Transverse colon (tissue), 4 donors: ENCODE measurements at regions of chr3 and their contacts with region 1.

Region 1: DNA sequence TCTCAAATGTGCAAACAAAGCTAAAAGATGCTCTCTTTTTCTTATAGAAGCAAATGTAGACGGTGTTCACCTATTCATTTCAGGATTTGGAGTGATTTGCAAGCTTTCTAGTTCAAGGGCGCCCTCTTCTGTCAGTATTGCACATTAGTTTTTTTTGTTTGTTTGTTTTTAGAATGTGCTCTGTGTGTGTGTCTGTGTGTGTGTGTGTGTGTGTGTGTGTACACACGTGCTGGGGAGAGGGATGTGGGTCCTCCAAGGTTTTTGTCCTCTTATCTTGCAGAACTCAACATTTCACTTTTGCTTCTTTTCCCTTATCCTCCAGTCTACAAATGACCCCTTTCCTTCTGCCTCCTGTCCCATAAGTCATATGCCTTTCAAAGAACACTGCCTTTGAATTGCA is 23.5 kb downstream of the DNAH1 start:
- DNase-seq: peak; percentile 33
- H3K4me3 ChIP-seq: no peak overlapping the region
- H3K27ac ChIP-seq: no peak overlapping the region
- H3K4me1 ChIP-seq: no peaks in the 10 kb centered on the region
- H3K27me3 ChIP-seq: no peaks in the 10 kb centered on the region
- CTCF ChIP-seq: peak; percentile 62 to 85 (median 66)
- EP300 ChIP-seq: no peak
- POLR2A ChIP-seq: no peak

Region 2: GRCh38 chr3:52001443-52001974 is 338.1 kb before region 1 on chr3:
- in situ Hi-C with region 1: loop called in 2 of 4 experiments (anchors 25 kb)
- intact Hi-C with region 1: no loop called
- DNase-seq: peak; percentile 79
- H3K4me3 ChIP-seq: no peak overlapping the region
- H3K27ac ChIP-seq: no peak overlapping the region
- H3K4me1 ChIP-seq: peaks cover 0 to 15% (median 6%) of the 10 kb centered on the region in 4 donors
- H3K27me3 ChIP-seq: peaks cover 4% of the 10 kb centered on the region
- CTCF ChIP-seq: peak; percentile 87 to 96 (median 90)
- EP300 ChIP-seq: no peak
- POLR2A ChIP-seq: no peak

Region 3: DNA sequence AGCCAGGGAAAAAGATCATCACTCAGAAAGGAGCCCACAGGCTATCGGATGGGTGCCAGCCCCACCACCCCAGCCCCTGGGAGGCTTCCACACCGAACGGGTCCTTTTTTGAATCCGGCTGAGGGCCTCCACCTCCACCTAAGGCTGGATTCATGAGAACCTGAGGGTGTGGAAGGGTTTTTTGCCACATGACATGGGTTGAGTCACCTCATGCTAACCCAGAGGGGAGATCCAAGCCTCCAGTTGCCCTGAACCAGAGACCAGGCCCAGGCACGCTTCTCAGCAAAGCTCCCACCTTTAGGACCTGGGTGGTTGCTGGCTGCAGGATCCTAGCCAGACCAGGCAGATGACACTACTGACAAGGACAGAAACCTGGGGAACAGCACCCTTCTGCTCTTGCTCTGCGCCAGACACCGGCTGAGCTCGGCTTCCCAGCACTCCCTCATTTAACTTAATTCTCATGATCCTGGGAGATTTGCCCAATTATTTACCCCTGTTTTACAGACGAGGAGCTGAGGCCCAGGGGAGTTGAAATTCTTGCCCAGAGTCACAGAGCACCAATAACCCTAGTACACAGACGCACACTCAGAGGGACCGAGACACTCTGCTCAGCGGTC is 308.8 kb before region 1 on chr3:
- in situ Hi-C with region 1: no loop called
- intact Hi-C with region 1: no loop called
- DNase-seq: no peak
- H3K4me3 ChIP-seq: no peak overlapping the region
- H3K27ac ChIP-seq: no peak overlapping the region
- H3K4me1 ChIP-seq: peaks cover 0 to 5% (median 0%) of the 10 kb centered on the region in 4 donors
- H3K27me3 ChIP-seq: no peaks in the 10 kb centered on the region
- CTCF ChIP-seq: no peak
- EP300 ChIP-seq: no peak
- POLR2A ChIP-seq: no peak

Region 4: DNA sequence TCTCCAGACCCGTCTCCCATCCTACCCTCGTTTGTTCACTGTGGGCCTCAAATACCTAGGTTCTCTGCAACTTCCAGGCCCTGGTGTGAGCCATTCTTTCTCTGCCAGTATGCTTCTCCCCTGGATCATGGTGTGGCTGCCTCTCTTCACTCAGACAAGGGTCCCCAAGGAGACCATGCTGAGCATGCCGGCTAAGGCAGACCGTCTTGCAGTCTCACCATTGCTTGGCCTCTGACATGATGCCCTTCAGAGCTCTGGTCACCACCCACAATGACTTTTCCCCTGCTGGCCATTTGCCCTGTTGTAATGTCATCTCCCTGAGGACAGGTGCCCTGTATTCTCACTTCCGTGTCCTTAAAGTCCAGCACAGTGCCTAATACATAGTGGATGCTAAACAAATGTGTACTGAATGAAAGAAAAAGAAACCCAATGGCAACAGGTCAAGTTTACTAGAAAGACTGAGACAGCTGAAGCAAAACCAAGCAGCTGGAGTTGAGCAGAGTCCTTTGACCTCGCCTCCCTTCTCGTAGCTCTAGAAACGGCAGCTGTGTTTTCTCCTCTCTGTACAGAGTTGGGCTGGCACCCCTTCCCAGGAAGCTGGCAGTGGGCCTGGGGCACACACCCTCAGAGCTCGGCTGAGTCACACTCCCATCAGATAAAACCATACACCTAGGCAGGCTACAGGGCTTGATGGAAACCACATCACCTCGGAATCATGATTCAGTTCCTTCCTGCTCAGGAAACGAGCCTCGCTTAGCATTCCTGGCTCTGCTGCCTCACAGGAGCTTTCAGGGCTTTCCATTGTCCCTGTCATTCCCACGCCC is 122.8 kb before region 1 on chr3:
- in situ Hi-C with region 1: loop called in 1 of 4 experiments (anchors 5 kb)
- intact Hi-C with region 1: loop called (anchors 2 kb)
- DNase-seq: peak; percentile 89
- H3K4me3 ChIP-seq: no peak overlapping the region
- H3K27ac ChIP-seq: peak overlapping the region; percentile 81 to 88 (median 87)
- H3K4me1 ChIP-seq: peaks cover 23 to 41% (median 30%) of the 10 kb centered on the region in 4 donors
- H3K27me3 ChIP-seq: no peaks in the 10 kb centered on the region
- CTCF ChIP-seq: peak in 2 of 5 experiments; percentile 34 to 56
- EP300 ChIP-seq: no peak
- POLR2A ChIP-seq: peak; percentile 70

Region 5: DNA sequence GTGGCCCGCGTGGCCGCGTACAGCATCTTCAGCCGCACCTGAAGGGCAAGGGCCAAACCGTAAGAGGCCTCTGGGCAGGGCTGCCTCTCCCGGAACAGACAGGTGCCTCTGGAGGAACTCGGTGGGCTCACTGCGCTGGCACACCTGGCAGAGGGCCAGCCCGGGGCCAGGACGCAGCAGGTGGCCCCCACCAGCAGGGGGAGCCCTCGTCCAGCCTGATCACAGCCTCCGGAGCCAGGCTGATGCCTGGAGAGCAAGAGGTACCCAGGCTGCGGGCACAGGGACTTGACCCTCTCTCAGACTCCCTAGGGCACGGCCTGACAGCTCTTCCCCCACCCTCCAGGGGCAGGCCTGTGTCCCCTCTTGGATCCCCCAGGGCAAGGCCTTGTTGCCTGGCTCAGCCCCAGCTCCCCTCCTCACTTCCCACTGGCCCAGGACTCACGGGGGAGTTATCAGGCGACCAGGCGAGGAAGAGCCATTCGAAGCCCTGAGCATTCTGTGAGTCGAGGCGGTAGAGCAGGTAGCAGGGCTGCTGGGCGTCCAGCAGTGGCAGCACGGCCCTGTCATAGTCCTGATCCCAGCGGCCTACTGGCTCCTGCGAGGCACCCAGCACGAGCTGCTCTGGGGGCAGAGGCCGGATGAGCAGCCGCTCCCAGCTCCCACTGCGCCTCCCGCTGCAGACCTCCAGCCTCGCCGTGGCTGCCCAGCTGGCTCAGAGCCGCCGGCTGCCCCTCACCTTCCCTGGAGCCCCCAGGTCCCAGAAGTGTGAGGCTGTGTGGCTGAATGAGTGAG is 107.9 kb before region 1 on chr3:
- in situ Hi-C with region 1: loop called in 3 of 4 experiments (anchors 5 to 25 kb)
- intact Hi-C with region 1: no loop called
- DNase-seq: peak; percentile 86
- H3K4me3 ChIP-seq: no peak overlapping the region
- H3K27ac ChIP-seq: no peak overlapping the region
- H3K4me1 ChIP-seq: peaks cover 4 to 10% (median 7%) of the 10 kb centered on the region in 4 donors
- H3K27me3 ChIP-seq: no peaks in the 10 kb centered on the region
- CTCF ChIP-seq: peak; percentile 89 to 95 (median 93)
- EP300 ChIP-seq: no peak
- POLR2A ChIP-seq: no peak

Region 6: DNA sequence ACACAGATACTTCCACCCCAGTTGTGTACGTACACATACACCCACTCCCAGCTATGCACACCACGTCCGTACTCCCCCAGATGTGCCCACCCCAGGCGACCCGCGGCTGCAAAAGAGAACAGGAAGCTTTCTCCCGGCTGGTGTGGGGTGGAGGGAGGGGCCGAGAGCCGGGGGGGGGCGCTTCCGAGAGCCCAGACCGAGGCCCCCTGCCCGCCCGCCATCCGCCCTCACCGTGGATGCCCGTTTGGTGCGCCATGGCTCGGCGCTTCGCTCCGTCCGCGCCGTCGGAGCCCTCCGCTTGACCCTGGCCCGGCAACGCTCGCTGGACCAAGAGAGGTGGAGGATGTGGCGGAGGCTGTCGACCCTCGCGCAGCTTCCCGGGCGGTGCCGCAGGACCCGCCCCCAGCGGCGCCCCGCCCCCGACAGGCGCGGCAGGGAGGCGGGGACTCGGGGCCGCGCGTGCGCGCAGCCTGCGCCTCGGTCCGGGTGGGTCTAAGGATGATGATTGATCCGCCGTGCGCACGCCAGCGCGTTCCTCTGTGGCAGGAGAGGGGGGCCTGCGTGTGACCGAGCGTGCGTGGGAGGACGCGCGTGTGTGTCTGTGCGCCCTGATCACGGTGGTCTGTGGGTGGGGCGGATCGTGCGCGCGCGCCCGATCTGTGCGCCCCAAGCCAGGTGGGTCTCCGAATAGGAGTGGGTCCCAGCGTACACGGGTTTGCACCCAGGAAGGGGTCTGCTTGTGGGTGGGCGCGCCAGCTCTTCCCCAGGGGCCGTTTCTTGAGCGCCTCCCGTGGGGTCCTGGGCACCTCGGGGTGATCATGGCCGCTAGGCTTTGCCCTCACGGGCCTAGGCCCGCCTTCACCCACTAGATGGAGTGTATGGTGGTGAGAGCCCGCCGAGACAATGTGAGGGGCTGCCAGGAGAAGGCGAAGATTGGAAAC is 100.6 kb before region 1 on chr3 and contains the start of gene TWF2:
- in situ Hi-C with region 1: loop called in 3 of 4 experiments (anchors 5 to 25 kb)
- intact Hi-C with region 1: no loop called
- DNase-seq: peak; percentile 85
- H3K4me3 ChIP-seq: peak within 1 kb of the TSS; percentile 69 to 82 (median 76)
- H3K27ac ChIP-seq: peak within 1 kb of the TSS; percentile 86 to 96 (median 94)
- H3K4me1 ChIP-seq: peaks cover 24 to 42% (median 31%) of the 10 kb centered on the region in 4 donors
- H3K27me3 ChIP-seq: no peaks in the 10 kb centered on the region
- CTCF ChIP-seq: peak; percentile 33 to 71 (median 47)
- EP300 ChIP-seq: no peak
- POLR2A ChIP-seq: peak; percentile 56
- total RNA-seq, gene TWF2: 29.9 to 82.7 (median 61.0) TPM

Region 7: GRCh38 chr3:52291508-52292181 is 48.0 kb before region 1 on chr3:
- in situ Hi-C with region 1: no loop called
- intact Hi-C with region 1: loop called (anchors 10 kb)
- DNase-seq: peak; percentile 41
- H3K4me3 ChIP-seq: peak overlapping the region in 1 of 4 donors; percentile 37
- H3K27ac ChIP-seq: no peak overlapping the region
- H3K4me1 ChIP-seq: peaks cover 16 to 29% (median 26%) of the 10 kb centered on the region in 4 donors
- H3K27me3 ChIP-seq: no peaks in the 10 kb centered on the region
- CTCF ChIP-seq: peak; percentile 35 to 61 (median 48)
- EP300 ChIP-seq: no peak
- POLR2A ChIP-seq: no peak

Region 8: GRCh38 chr3:52792961-52793695 is 453.5 kb after region 1 on chr3:
- in situ Hi-C with region 1: no loop called
- intact Hi-C with region 1: no loop called
- DNase-seq: no peak
- H3K4me3 ChIP-seq: no peak overlapping the region
- H3K27ac ChIP-seq: no peak overlapping the region
- H3K4me1 ChIP-seq: no peaks in the 10 kb centered on the region
- H3K27me3 ChIP-seq: no peaks in the 10 kb centered on the region
- CTCF ChIP-seq: no peak
- EP300 ChIP-seq: no peak
- POLR2A ChIP-seq: no peak